ENCODE measurements at regions of chr3 and their contacts with region 1.

Region 1: GRCh38 chr3:171646357-171647133 is 163.7 kb downstream of the PLD1 start:
- DNase-seq: peak in 1 of 2 donors; percentile 57
- ATAC-seq: peak; percentile 57 to 88 (median 80)
- H3K4me3 ChIP-seq: no peak overlapping the region
- H3K27ac ChIP-seq: peak overlapping the region in 9 of 10 donors; percentile 37 to 82 (median 66)
- H3K4me1 ChIP-seq: peaks cover 0 to 65% (median 29%) of the 10 kb centered on the region in 9 donors
- H3K27me3 ChIP-seq: no peaks in the 10 kb centered on the region
- CTCF ChIP-seq: peak; percentile 40 to 76 (median 65)

Region 2: GRCh38 chr3:171801738-171802600 is 155.4 kb after region 1 on chr3:
- intact Hi-C with region 1: no loop called
- DNase-seq: no peak
- ATAC-seq: peak in 4 of 8 donors; percentile 20 to 25 (median 22)
- H3K4me3 ChIP-seq: no peak overlapping the region
- H3K27ac ChIP-seq: peak overlapping the region in 8 of 10 donors; percentile 7 to 82 (median 57)
- H3K4me1 ChIP-seq: peaks cover 5 to 86% (median 56%) of the 10 kb centered on the region in 9 donors
- H3K27me3 ChIP-seq: no peaks in the 10 kb centered on the region
- CTCF ChIP-seq: no peak

Region 3: GRCh38 chr3:171838218-171838761 is 191.7 kb after region 1 on chr3:
- intact Hi-C with region 1: loop called in 5 of 10 experiments (anchors 2 to 10 kb)
- DNase-seq: peak; percentile 39 to 72
- ATAC-seq: peak; percentile 75 to 85 (median 78)
- H3K4me3 ChIP-seq: peak overlapping the region in 7 of 10 donors; percentile 6 to 36 (median 23)
- H3K27ac ChIP-seq: peak overlapping the region; percentile 53 to 84 (median 78)
- H3K4me1 ChIP-seq: peaks cover 3 to 84% (median 64%) of the 10 kb centered on the region in 9 donors
- H3K27me3 ChIP-seq: no peaks in the 10 kb centered on the region
- CTCF ChIP-seq: peak in 1 of 9 donors; percentile 27

Region 4: GRCh38 chr3:172341482-172342059 is 695.0 kb after region 1 on chr3:
- intact Hi-C with region 1: loop called in 4 of 10 experiments (anchors 10 kb)
- DNase-seq: no peak
- ATAC-seq: peak; percentile 54 to 78 (median 68)
- H3K4me3 ChIP-seq: no peak overlapping the region
- H3K27ac ChIP-seq: peak overlapping the region in 1 of 10 donors; percentile 26
- H3K4me1 ChIP-seq: no peaks in the 10 kb centered on the region
- H3K27me3 ChIP-seq: no peaks in the 10 kb centered on the region
- CTCF ChIP-seq: peak; percentile 50 to 85 (median 75)

Region 5: DNA sequence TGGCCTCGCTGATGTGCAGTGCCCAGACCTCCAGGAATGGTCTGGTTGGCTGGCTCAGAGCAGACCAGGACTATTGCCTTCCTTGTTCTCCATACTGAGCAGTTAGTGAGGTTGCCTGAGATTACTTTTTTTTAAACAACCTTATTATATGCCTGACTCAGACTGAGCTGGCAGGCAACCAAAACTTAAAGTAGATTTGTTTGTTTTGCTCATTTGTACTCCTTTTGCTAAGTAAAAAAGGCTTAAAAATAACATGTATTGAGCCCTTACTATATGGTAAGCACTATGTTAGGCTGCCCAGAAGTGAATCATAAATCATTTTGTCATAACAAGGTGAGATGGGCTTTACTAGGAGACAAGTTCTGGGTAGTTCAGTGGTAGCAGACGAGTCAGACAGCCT is 709.3 kb after region 1 on chr3:
- intact Hi-C with region 1: loop called in 1 of 10 experiments (anchors 10 kb)
- DNase-seq: no peak
- ATAC-seq: peak in 6 of 8 donors; percentile 45 to 75 (median 62)
- H3K4me3 ChIP-seq: no peak overlapping the region
- H3K27ac ChIP-seq: peak overlapping the region in 2 of 10 donors; percentile 12 to 22
- H3K4me1 ChIP-seq: peaks cover 0 to 44% (median 28%) of the 10 kb centered on the region in 9 donors
- H3K27me3 ChIP-seq: no peaks in the 10 kb centered on the region
- CTCF ChIP-seq: no peak

Measured in heart right ventricle (tissue), 16 donors.